Activated CD4-positive, alpha-beta T cell treated with anti-CD3 and anti-CD28 coated beads for 36 hours (primary cell): ENCODE measurements at regions of chr6 and their contacts with region 1.

Region 1: GRCh38 chr6:27205375-27206278 is 41.9 kb upstream of the PRSS16 start:
- DNase-seq: peak; percentile 56
- ATAC-seq: no peak
- H3K4me3 Mint-ChIP-seq: peak overlapping the region; percentile 39
- H3K27ac Mint-ChIP-seq: no peak overlapping the region
- H3K4me1 Mint-ChIP-seq: peaks cover 11% of the 10 kb centered on the region
- H3K27me3 Mint-ChIP-seq: peaks cover 34% of the 10 kb centered on the region

Region 2: DNA sequence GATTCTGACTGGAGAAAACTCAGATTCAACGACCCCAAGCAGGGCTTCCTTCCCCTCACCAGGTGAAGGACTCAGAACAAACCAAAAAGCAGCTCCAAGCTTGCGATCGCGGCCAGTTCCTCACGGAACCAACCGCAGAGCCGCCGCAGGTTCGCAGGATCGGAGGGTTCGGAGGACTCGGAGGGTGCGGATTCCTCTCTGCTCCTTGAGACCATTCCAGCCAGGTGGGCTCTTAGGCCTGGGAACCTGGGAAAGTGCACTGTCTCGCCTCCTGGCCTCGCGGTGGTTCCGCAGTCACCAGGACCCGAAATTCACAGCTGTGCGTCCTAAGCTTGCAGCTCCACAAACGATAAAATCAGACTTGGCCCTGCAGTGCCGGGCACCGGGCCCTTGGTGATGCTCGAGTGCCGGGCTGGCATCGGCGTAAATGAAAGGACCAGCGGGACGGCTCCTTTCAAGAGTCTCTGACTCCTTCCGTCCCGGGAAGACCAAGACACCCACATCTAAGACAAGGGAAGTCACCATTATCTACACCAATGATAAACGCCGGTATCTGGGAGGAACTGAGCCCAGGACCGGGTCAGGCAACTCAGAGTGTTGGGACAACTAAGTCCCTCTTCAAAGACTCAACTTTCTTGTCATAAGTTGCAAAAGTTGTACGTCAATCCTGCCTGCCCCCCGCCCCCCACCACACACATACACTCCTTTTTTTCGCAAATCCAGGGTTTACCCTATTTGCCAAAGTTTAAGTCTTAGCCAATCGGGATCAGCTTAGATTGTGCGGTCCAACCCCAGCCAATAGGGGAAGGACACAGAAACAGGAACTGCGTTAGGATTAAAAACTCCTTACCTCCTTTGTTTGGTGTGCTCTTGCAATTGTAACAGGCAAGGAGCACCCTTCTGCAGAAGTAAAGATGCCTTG is 27.9 kb before region 1 on chr6:
- CTCF ChIA-PET with region 1: no interaction called
- POLR2A ChIA-PET with region 1: no interaction called
- intact Hi-C with region 1: no loop called
- DNase-seq: peak; percentile 86
- ATAC-seq: peak; percentile 89
- H3K4me3 Mint-ChIP-seq: peak overlapping the region; percentile 88
- H3K27ac Mint-ChIP-seq: peak overlapping the region; percentile 87
- H3K4me1 Mint-ChIP-seq: peaks cover 2% of the 10 kb centered on the region
- H3K27me3 Mint-ChIP-seq: no peaks in the 10 kb centered on the region

Region 3: GRCh38 chr6:27303613-27304272 is 98.1 kb after region 1 on chr6:
- CTCF ChIA-PET with region 1: no interaction called
- POLR2A ChIA-PET with region 1: no interaction called
- intact Hi-C with region 1: loop called in 1 of 2 experiments (anchors 5 kb)
- DNase-seq: no peak
- ATAC-seq: no peak
- H3K4me3 Mint-ChIP-seq: no peak overlapping the region
- H3K27ac Mint-ChIP-seq: no peak overlapping the region
- H3K4me1 Mint-ChIP-seq: no peaks in the 10 kb centered on the region
- H3K27me3 Mint-ChIP-seq: peaks cover 60% of the 10 kb centered on the region